HepG2 (cell line): ENCODE measurements at regions of chr12 and their contacts with region 1.

Region 1: GRCh38 chr12:88141770-88142609 is at the starts of genes CEP290 and TMTC3:
- DNase-seq: peak; percentile 99
- ATAC-seq: peak; percentile 97
- H3K4me3 ChIP-seq: peak within 1 kb of the TSS; percentile 73 to 86 (median 75)
- H3K27ac ChIP-seq: peak within 1 kb of the TSS; percentile 68
- H3K4me1 ChIP-seq: peaks cover 34% of the 10 kb centered on the region
- H3K27me3 ChIP-seq: no peaks in the 10 kb centered on the region; a peak in 1 of 5 replicates
- CTCF ChIP-seq: no peak
- EP300 ChIP-seq: 0 out of 4 replicates have a peak, but pooled peaks of 1 of the 2 experiments have one; percentile 12
- POLR2A ChIP-seq: peak; percentile 47 to 62; a peak in 3 of 4 replicates
- RAD21 ChIP-seq: no peak
- total RNA-seq, gene CEP290: 10.8 and 13.2 TPM in 2 replicates
- total RNA-seq, gene TMTC3: 18.6 and 22.5 TPM in 2 replicates

Region 2: DNA sequence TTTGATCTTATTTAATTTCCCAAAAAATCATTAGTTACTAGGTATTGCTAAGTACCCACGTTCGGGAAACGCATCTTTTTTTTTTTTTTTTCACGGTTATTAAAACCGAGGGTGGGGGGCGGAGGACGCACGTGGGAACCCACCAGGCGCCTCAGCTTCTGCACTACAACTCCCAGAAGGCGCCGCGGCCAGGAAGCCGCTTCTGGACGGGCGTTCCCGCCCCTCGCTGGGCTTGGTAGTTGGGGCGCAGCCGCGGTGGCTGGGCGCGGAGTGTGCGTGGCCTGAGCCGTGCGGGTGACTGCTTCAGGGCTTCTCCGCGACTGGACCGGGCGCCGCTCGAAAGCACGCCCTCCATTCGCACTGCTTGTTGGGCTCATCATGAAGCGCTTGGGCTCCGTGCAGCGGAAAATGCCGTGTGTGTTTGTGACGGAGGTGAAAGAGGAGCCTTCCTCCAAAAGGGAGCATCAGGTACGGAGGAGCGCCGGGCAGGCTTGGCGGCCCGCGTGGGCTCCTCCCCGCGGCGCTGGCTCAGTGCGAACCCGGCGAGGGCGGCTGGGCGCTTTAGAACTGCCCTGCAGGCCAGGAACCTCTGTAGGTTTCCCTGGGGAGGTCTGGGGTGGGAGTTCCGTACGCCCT is 106.6 kb before region 1 on chr12:
- CTCF ChIA-PET with region 1: no interaction called
- POLR2A ChIA-PET with region 1: interaction called, 4 read pairs
- in situ Hi-C with region 1: no loop called
- intact Hi-C with region 1: loop called (anchors 5 kb)
- DNase-seq: peak; percentile 75
- ATAC-seq: peak; percentile 100
- H3K4me3 ChIP-seq: peak overlapping the region; percentile 66 to 86 (median 85)
- H3K27ac ChIP-seq: peak overlapping the region; percentile 54
- H3K4me1 ChIP-seq: peaks cover 31% of the 10 kb centered on the region
- H3K27me3 ChIP-seq: no peaks in the 10 kb centered on the region; a peak in 1 of 5 replicates
- CTCF ChIP-seq: no peak
- EP300 ChIP-seq: no peak
- POLR2A ChIP-seq: peak; percentile 92 to 99
- RAD21 ChIP-seq: no peak

Region 3: DNA sequence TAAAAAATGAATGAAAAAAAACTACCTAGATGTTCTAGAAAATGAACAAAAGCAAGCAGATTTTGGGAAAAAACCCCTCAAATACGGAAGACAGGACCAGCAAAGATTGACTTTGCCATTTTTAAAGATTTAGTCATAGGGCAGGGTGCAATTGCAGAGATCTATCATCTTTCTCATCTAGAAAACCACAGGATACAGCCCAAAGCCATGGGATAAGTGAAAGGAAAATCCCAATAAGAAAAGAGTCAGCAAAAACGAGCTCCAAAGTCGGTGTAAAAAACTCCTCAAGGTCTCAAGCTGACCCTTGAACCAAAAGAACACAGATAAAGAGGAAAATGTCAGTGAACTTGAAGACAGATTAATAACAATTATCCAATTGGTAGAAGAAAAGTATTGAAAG is 28.1 kb before region 1 on chr12:
- CTCF ChIA-PET with region 1: no interaction called
- POLR2A ChIA-PET with region 1: no interaction called
- in situ Hi-C with region 1: no loop called
- intact Hi-C with region 1: no loop called
- DNase-seq: no peak
- ATAC-seq: no peak
- H3K4me3 ChIP-seq: no peak overlapping the region
- H3K27ac ChIP-seq: no peak overlapping the region
- H3K4me1 ChIP-seq: peaks cover 7% of the 10 kb centered on the region
- H3K27me3 ChIP-seq: no peaks in the 10 kb centered on the region
- CTCF ChIP-seq: no peak
- EP300 ChIP-seq: no peak
- POLR2A ChIP-seq: no peak
- RAD21 ChIP-seq: no peak

Region 4: GRCh38 chr12:88179436-88180014 is 37.5 kb after region 1 on chr12:
- CTCF ChIA-PET with region 1: no interaction called
- POLR2A ChIA-PET with region 1: interaction called, 3 read pairs
- in situ Hi-C with region 1: no loop called
- intact Hi-C with region 1: loop called (anchors 5 kb)
- DNase-seq: peak; percentile 34
- ATAC-seq: peak; percentile 99
- H3K4me3 ChIP-seq: no peak overlapping the region
- H3K27ac ChIP-seq: no peak overlapping the region
- H3K4me1 ChIP-seq: peaks cover 24% of the 10 kb centered on the region
- H3K27me3 ChIP-seq: no peaks in the 10 kb centered on the region
- CTCF ChIP-seq: no peak
- EP300 ChIP-seq: no peak
- POLR2A ChIP-seq: no peak
- RAD21 ChIP-seq: no peak

Region 5: GRCh38 chr12:88580051-88580871 is 438.3 kb after region 1 on chr12 and contains the start of gene KITLG:
- CTCF ChIA-PET with region 1: no interaction called
- POLR2A ChIA-PET with region 1: no interaction called
- in situ Hi-C with region 1: no loop called
- intact Hi-C with region 1: loop called (anchors 10 kb)
- DNase-seq: peak; percentile 56
- ATAC-seq: peak; percentile 96
- H3K4me3 ChIP-seq: peak within 1 kb of the TSS; percentile 68 to 74 (median 72)
- H3K27ac ChIP-seq: no peak within 1 kb of the TSS
- H3K4me1 ChIP-seq: peaks cover 23% of the 10 kb centered on the region
- H3K27me3 ChIP-seq: no peaks in the 10 kb centered on the region
- CTCF ChIP-seq: peak; percentile 59
- EP300 ChIP-seq: no peak
- POLR2A ChIP-seq: peak; percentile 26 to 79; a peak in 2 of 4 replicates
- RAD21 ChIP-seq: peak; percentile 23; the same call in 1 of the 2 replicates
- total RNA-seq, gene KITLG: 4.3 and 5.3 TPM in 2 replicates

Region 6: DNA sequence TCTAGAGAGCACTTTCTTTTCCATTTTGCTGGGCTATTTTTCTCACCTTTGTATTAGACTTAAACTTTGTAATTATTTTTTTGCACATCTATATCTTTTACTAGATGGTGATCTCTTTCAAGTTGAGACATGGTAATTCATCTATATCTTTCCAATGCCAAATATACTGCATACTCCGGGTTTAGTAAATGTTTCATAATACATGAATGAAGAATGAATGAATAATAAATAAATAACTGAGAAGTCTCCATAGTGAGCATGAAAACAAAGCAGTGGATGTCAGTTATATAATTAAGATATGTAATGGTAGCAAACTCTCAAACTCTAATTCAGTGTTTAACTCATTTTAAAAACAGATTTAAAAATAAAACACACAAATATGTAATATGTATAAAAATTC is 780.8 kb after region 1 on chr12:
- CTCF ChIA-PET with region 1: no interaction called
- POLR2A ChIA-PET with region 1: no interaction called
- in situ Hi-C with region 1: no loop called
- intact Hi-C with region 1: loop called (anchors 10 kb)
- DNase-seq: no peak
- ATAC-seq: no peak
- H3K4me3 ChIP-seq: no peak overlapping the region
- H3K27ac ChIP-seq: no peak overlapping the region
- H3K4me1 ChIP-seq: peaks cover 20% of the 10 kb centered on the region
- H3K27me3 ChIP-seq: no peaks in the 10 kb centered on the region
- CTCF ChIP-seq: no peak
- EP300 ChIP-seq: no peak
- POLR2A ChIP-seq: no peak
- RAD21 ChIP-seq: no peak

Region 7: DNA sequence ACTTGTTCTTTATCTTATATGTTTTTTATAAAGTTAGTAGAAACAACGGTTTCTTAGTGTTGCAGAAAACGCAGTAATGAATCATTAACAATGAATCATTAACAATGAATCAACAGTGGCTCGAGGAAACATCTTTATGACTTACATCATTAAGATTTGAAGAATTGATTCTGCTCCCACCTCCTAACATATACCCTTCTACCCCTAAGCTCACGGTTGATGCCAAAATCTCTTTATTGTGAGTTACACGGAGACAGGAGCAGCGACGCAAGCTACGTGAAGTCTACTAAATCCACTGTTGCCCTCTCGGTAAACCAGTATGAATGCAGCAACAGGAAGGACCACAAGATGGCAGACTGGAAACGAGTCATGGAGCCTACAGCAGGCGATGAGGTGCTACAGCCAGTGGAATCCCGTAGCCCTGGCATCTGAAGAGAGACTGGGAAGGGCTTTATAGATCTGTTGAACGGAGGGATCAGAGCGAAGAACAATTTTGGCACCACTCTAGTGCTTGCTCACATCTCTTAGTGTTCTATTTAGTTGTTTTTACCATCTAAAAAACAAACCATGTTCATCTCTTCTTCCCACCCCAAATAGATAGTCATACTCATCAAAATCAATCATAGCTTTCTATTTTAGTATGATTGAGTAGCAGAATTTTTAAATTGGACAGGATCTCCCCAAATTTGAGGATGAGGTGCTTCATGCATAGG is 877.6 kb after region 1 on chr12:
- CTCF ChIA-PET with region 1: no interaction called
- POLR2A ChIA-PET with region 1: no interaction called
- in situ Hi-C with region 1: no loop called
- intact Hi-C with region 1: loop called (anchors 10 kb)
- DNase-seq: peak; percentile 78
- ATAC-seq: peak; percentile 100
- H3K4me3 ChIP-seq: peak overlapping the region in 2 of 3 experiments; percentile 37 to 41; a peak in 4 of 6 replicates
- H3K27ac ChIP-seq: no peak overlapping the region
- H3K4me1 ChIP-seq: no peaks in the 10 kb centered on the region
- H3K27me3 ChIP-seq: peaks cover 0 to 3% of the 10 kb centered on the region in 2 experiments; a peak in 2 of 5 replicates
- CTCF ChIP-seq: peak; percentile 94
- EP300 ChIP-seq: no peak
- POLR2A ChIP-seq: no peak
- RAD21 ChIP-seq: peak; percentile 77